ENCODE measurements at regions of chr17 and their contacts with region 1.

Region 1: GRCh38 chr17:81959362-81960129 is 1.4 kb downstream of the NOTUM start:
- DNase-seq: peak; percentile 47 to 80 (median 73)
- H3K4me3 ChIP-seq: peak overlapping the region; percentile 9
- H3K27ac ChIP-seq: no peak overlapping the region
- H3K4me1 ChIP-seq: no peaks in the 10 kb centered on the region
- H3K27me3 ChIP-seq: peaks cover 5% of the 10 kb centered on the region
- CTCF ChIP-seq: peak in 2 of 3 donors; percentile 95 to 96
- EP300 ChIP-seq: no peak
- POLR2A ChIP-seq: peak; percentile 21

Region 2: DNA sequence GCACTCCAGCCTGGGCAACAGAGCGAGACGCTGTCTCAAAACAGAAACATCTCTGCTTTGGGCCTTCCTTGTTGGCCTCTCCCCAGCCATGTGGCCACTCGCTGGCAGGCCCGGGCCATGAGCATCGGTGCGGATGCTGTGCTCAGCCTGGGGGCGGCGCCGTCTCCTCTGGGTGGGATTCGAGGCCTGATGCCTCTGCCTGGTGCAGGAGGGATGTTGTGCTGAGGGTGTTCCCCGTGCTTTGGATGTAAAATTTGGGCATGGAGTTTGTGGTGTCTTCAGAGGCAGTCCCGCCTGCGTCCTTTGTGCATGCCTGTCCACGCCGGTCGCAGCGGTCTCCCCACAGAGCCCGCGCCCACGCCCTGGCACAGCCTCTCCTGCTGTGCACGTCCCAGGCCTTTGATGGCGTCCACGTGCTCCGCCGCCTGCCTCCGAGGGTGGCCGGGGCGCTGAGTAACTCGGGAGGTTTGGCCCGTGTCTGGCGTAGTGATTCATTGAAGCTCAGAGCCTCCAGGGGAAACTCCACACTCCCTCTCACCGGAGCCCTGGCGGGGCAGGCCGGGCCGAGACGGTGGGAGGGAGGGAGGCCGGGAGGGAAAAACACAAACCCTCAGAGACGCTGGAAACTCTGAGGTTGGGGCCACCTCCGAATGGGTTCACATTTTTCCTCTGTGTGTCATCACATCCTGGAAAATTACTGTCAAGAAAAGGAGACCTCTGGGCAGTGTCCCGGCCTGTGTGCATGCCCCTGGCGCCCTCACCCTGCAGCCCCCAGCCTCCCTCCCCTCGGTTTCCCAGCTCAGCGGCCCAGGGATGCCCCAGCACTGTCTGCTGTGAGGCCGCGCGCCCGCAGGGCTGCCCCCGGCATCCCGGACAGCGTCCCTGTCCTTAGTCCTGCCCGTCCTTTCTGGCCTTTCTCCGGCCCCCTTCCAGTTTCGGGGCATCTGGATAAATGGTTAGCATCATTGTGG is 44.1 kb after region 1 on chr17:
- intact Hi-C with region 1: loop called in 1 of 4 experiments (anchors 5 kb)
- DNase-seq: peak; percentile 68 to 80 (median 79)
- H3K4me3 ChIP-seq: no peak overlapping the region
- H3K27ac ChIP-seq: no peak overlapping the region
- H3K4me1 ChIP-seq: peaks cover 7% of the 10 kb centered on the region
- H3K27me3 ChIP-seq: no peaks in the 10 kb centered on the region
- CTCF ChIP-seq: no peak
- EP300 ChIP-seq: no peak
- POLR2A ChIP-seq: no peak

Region 3: GRCh38 chr17:82022981-82023374 is 63.4 kb after region 1 on chr17 and contains the start of gene LRRC45:
- intact Hi-C with region 1: loop called (anchors 2 to 5 kb)
- DNase-seq: peak; percentile 99 to 100 (median 100)
- H3K4me3 ChIP-seq: peak within 1 kb of the TSS; percentile 95
- H3K27ac ChIP-seq: peak within 1 kb of the TSS; percentile 20 to 44
- H3K4me1 ChIP-seq: peaks cover 8% of the 10 kb centered on the region
- H3K27me3 ChIP-seq: no peaks in the 10 kb centered on the region
- CTCF ChIP-seq: no peak
- EP300 ChIP-seq: no peak
- POLR2A ChIP-seq: no peak
- total RNA-seq, gene LRRC45: 3.5 to 16.4 (median 7.1) TPM

Region 4: GRCh38 chr17:82153745-82154375 is 194.3 kb after region 1 on chr17:
- intact Hi-C with region 1: loop called (anchors 5 to 10 kb)
- DNase-seq: peak; percentile 70 to 87 (median 81)
- H3K4me3 ChIP-seq: no peak overlapping the region
- H3K27ac ChIP-seq: no peak overlapping the region
- H3K4me1 ChIP-seq: no peaks in the 10 kb centered on the region
- H3K27me3 ChIP-seq: no peaks in the 10 kb centered on the region
- CTCF ChIP-seq: peak; percentile 76 to 92 (median 91)
- EP300 ChIP-seq: no peak
- POLR2A ChIP-seq: peak; percentile 24

Measured in ovary (tissue), 10 donors.